ENCODE measurements at regions of chr17 and their contacts with region 1.

Region 1: GRCh38 chr17:50547035-50547735 is at the start of gene SPATA20:
- DNase-seq: peak; percentile 85 to 93 (median 91)
- H3K4me3 ChIP-seq: peak within 1 kb of the TSS; percentile 31 to 81 (median 46)
- H3K4me3 Mint-ChIP-seq: peak within 1 kb of the TSS; percentile 73 to 86
- H3K27ac ChIP-seq: peak within 1 kb of the TSS in 1 of 2 donors; percentile 75
- H3K27ac Mint-ChIP-seq: peak within 1 kb of the TSS; percentile 49 to 80 (median 66)
- H3K4me1 ChIP-seq: peaks cover 23 to 28% of the 10 kb centered on the region in 2 donors
- H3K4me1 Mint-ChIP-seq: peaks cover 28% of the 10 kb centered on the region
- H3K27me3 ChIP-seq: no peaks in the 10 kb centered on the region
- H3K27me3 Mint-ChIP-seq: peaks cover 9 to 15% (median 14%) of the 10 kb centered on the region in 3 donors
- CTCF ChIP-seq: peak; percentile 98
- polyA plus RNA-seq, gene SPATA20: 9.3 to 37.8 (median 12.2) TPM

Region 2: DNA sequence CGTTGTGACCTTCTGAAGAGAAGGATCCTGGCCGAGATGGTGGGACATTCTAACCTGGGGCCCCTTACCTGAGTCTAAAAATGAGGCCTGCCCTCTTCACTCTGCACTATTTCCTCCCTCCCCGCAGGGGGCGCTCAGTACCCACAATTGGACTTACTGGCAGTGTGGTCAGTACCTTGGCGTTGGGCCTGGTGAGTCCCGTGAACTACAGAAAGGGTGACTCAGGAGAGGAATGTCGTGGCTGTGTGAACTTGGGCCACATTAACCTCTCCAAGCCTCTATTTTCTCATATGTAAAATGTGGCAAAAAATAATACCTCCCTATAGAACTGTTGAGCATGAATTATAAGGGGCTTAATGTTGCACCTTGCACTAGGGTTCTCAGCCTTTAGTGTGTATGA is 64.7 kb before region 1 on chr17:
- intact Hi-C with region 1: loop called (anchors 5 to 10 kb)
- DNase-seq: peak; percentile 82 to 92 (median 85)
- H3K4me3 ChIP-seq: no peak overlapping the region
- H3K4me3 Mint-ChIP-seq: no peak overlapping the region
- H3K27ac ChIP-seq: no peak overlapping the region
- H3K27ac Mint-ChIP-seq: peak overlapping the region in 5 of 7 donors; percentile 38 to 83 (median 69)
- H3K4me1 ChIP-seq: peaks cover 33 to 48% of the 10 kb centered on the region in 2 donors
- H3K4me1 Mint-ChIP-seq: peaks cover 33% of the 10 kb centered on the region
- H3K27me3 ChIP-seq: no peaks in the 10 kb centered on the region
- H3K27me3 Mint-ChIP-seq: peaks cover 0 to 2% (median 0%) of the 10 kb centered on the region in 3 donors
- CTCF ChIP-seq: peak; percentile 94

Region 3: GRCh38 chr17:50626037-50626574 is 78.9 kb after region 1 on chr17:
- intact Hi-C with region 1: loop called (anchors 2 kb)
- DNase-seq: peak; percentile 45 to 69 (median 62)
- H3K4me3 ChIP-seq: no peak overlapping the region
- H3K4me3 Mint-ChIP-seq: no peak overlapping the region
- H3K27ac ChIP-seq: no peak overlapping the region
- H3K27ac Mint-ChIP-seq: no peak overlapping the region
- H3K4me1 ChIP-seq: peaks cover 15 to 41% of the 10 kb centered on the region in 2 donors
- H3K4me1 Mint-ChIP-seq: peaks cover 19% of the 10 kb centered on the region
- H3K27me3 ChIP-seq: peaks cover 0 to 19% of the 10 kb centered on the region in 2 donors
- H3K27me3 Mint-ChIP-seq: peaks cover 39 to 55% (median 46%) of the 10 kb centered on the region in 3 donors
- CTCF ChIP-seq: peak; percentile 64

Region 4: GRCh38 chr17:50681263-50682210 is 134.4 kb after region 1 on chr17:
- intact Hi-C with region 1: loop called (anchors 5 kb)
- DNase-seq: peak; percentile 57 to 72 (median 67)
- H3K4me3 ChIP-seq: peak overlapping the region in 1 of 3 experiments; percentile 47
- H3K4me3 Mint-ChIP-seq: peak overlapping the region; percentile 60 to 91
- H3K27ac ChIP-seq: no peak overlapping the region
- H3K27ac Mint-ChIP-seq: peak overlapping the region in 2 of 7 donors; percentile 31 to 33
- H3K4me1 ChIP-seq: peaks cover 5 to 9% of the 10 kb centered on the region in 2 donors
- H3K4me1 Mint-ChIP-seq: peaks cover 9% of the 10 kb centered on the region
- H3K27me3 ChIP-seq: no peaks in the 10 kb centered on the region
- H3K27me3 Mint-ChIP-seq: peaks cover 11 to 14% (median 13%) of the 10 kb centered on the region in 3 donors
- CTCF ChIP-seq: peak; percentile 36

Region 5: DNA sequence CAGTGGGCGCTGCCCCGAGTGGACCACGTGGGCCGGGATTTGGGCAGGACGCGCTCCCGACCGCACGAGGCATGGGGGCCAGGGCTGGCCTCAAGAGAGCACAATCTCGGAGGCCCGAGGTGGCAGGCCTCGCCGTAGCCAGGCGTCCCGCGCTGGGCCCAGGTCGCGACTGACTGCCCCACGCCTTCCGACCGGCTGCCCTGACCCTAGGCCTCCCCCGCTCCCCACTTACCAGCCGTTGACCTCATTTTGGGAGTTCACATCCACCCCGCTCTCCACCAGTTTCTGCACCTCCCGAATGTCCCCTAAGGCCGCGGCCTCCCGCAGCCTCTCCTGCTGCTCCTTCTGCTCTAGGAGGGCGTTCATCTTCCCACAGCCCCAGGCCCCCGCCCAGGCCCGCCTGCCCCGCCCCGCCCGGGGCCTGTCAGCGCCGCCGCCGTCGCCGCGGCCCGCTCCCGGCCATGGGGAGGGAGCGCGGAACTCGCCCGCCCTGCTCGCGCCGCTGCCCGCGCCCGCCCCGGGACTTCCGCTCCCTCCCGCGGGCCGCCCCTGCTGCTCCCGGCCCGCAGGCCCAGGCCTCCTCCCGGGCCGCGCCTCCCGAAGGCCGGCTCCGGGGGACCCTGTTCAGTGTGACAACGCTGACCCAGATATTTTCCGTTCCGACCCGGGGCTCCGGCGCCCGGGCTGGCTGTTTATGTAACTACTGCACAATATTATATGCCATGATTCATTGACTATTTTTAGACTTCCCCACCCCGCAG is 160.3 kb after region 1 on chr17 and contains the start of gene ANKRD40:
- intact Hi-C with region 1: loop called (anchors 5 to 10 kb)
- DNase-seq: peak; percentile 90 to 94 (median 90)
- H3K4me3 ChIP-seq: peak within 1 kb of the TSS; percentile 59 to 85 (median 70)
- H3K4me3 Mint-ChIP-seq: peak within 1 kb of the TSS; percentile 96 to 97
- H3K27ac ChIP-seq: peak within 1 kb of the TSS; percentile 82 to 96
- H3K27ac Mint-ChIP-seq: peak within 1 kb of the TSS; percentile 96 to 98 (median 98)
- H3K4me1 ChIP-seq: peaks cover 29 to 40% of the 10 kb centered on the region in 2 donors
- H3K4me1 Mint-ChIP-seq: peaks cover 38% of the 10 kb centered on the region
- H3K27me3 ChIP-seq: no peaks in the 10 kb centered on the region
- H3K27me3 Mint-ChIP-seq: no peaks in the 10 kb centered on the region
- CTCF ChIP-seq: no peak
- polyA plus RNA-seq, gene ANKRD40: 3.4 to 21.8 (median 3.4) TPM

Region 6: DNA sequence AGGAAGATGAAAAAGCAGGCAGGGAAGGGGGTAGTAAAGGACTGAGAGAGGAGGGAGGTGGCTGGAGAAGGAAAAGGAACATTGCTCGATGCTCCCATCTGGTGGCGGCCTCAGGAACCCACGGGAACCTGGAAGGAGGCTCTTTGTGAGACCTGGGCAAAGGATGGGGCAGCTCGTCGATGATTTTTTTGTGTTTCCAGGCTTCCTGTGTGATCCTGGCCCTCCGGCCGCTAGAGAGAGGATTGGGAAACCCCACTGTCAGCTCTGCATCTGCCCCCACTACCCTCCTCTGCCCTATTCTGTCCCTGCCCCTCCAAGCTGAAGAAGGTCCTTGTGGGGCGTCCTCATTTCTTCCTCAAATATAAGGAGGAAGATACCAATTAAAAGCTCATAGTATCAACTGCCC is 294.8 kb after region 1 on chr17:
- intact Hi-C with region 1: loop called in 1 of 2 experiments (anchors 10 kb)
- DNase-seq: peak; percentile 42 to 55 (median 51)
- H3K4me3 ChIP-seq: no peak overlapping the region
- H3K4me3 Mint-ChIP-seq: no peak overlapping the region
- H3K27ac ChIP-seq: no peak overlapping the region
- H3K27ac Mint-ChIP-seq: peak overlapping the region in 1 of 7 donors; percentile 47
- H3K4me1 ChIP-seq: no peaks in the 10 kb centered on the region
- H3K4me1 Mint-ChIP-seq: peaks cover 2% of the 10 kb centered on the region
- H3K27me3 ChIP-seq: no peaks in the 10 kb centered on the region
- H3K27me3 Mint-ChIP-seq: no peaks in the 10 kb centered on the region
- CTCF ChIP-seq: peak; percentile 76